GM12878 (cell line): ENCODE measurements at regions of chr7 and their contacts with region 1.

Region 1: DNA sequence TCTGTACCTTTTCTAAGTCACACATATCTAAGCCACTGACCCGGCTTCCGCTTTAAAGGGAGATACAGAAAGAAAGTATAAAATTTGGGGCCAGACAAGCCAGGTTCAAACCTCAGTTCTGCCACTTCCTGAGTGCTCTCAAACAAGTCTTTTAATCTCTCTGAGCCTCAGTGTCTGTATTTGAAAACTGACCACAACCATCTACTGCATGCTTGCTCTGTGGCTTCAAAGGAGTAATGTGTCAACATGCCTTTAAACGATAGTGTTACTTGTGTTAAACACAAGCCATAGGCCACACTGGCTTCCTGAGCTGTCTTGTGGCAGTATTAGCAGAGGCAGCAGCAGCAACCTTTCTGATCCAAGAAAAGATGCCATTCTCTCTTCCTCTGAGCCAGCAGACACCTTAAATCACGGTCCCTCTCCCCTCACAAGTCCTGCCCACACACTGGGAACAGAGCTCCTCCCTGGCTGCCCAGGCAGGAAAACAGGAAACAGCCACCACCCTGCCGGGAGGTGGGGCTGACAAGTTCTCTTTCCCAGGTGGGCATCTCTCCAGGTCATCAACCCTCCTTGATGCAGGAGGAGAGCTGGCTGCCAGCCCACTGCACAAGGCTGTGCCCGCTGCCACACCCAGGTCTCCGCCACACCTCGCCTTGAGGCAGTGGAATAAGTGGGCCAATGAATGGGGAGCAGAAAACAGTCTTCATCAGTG is 10.7 kb downstream of the HIP1 start:
- DNase-seq: no peak
- ATAC-seq: peak; percentile 60
- H3K4me3 ChIP-seq: no peak overlapping the region
- H3K27ac ChIP-seq: peak overlapping the region; percentile 63
- H3K4me1 ChIP-seq: peaks cover 26% of the 10 kb centered on the region
- H3K27me3 ChIP-seq: no peaks in the 10 kb centered on the region
- CTCF ChIP-seq: no peak
- EP300 ChIP-seq: no peak
- POLR2A ChIP-seq: no peak
- RAD21 ChIP-seq: no peak

Region 2: GRCh38 chr7:75565132-75565837 is 162.8 kb before region 1 on chr7:
- CTCF ChIA-PET with region 1: no interaction called
- POLR2A ChIA-PET with region 1: no interaction called
- RAD21 ChIA-PET with region 1: no interaction called
- SMC1A ChIA-PET with region 1: no interaction called
- in situ Hi-C with region 1: no loop called
- intact Hi-C with region 1: no loop called
- DNase-seq: no peak
- ATAC-seq: no peak
- H3K4me3 ChIP-seq: no peak overlapping the region
- H3K27ac ChIP-seq: no peak overlapping the region
- H3K4me1 ChIP-seq: no peaks in the 10 kb centered on the region
- H3K27me3 ChIP-seq: no peaks in the 10 kb centered on the region
- CTCF ChIP-seq: no peak
- EP300 ChIP-seq: no peak
- POLR2A ChIP-seq: no peak
- RAD21 ChIP-seq: no peak

Region 3: GRCh38 chr7:75738987-75739795 is 11.2 kb after region 1 on chr7:
- CTCF ChIA-PET with region 1: interaction called, 3 read pairs
- POLR2A ChIA-PET with region 1: interaction called, 4 read pairs
- RAD21 ChIA-PET with region 1: interaction called, 10 read pairs
- SMC1A ChIA-PET with region 1: interaction called, 4 read pairs
- in situ Hi-C with region 1: no loop called
- intact Hi-C with region 1: no loop called
- DNase-seq: peak; percentile 79
- ATAC-seq: peak; percentile 95
- H3K4me3 ChIP-seq: peak overlapping the region; percentile 99
- H3K27ac ChIP-seq: peak overlapping the region; percentile 71
- H3K4me1 ChIP-seq: peaks cover 18% of the 10 kb centered on the region
- H3K27me3 ChIP-seq: no peaks in the 10 kb centered on the region
- CTCF ChIP-seq: no peak
- EP300 ChIP-seq: no peak; a peak in 1 of 4 replicates
- POLR2A ChIP-seq: peak; percentile 54
- RAD21 ChIP-seq: no peak

Region 4: DNA sequence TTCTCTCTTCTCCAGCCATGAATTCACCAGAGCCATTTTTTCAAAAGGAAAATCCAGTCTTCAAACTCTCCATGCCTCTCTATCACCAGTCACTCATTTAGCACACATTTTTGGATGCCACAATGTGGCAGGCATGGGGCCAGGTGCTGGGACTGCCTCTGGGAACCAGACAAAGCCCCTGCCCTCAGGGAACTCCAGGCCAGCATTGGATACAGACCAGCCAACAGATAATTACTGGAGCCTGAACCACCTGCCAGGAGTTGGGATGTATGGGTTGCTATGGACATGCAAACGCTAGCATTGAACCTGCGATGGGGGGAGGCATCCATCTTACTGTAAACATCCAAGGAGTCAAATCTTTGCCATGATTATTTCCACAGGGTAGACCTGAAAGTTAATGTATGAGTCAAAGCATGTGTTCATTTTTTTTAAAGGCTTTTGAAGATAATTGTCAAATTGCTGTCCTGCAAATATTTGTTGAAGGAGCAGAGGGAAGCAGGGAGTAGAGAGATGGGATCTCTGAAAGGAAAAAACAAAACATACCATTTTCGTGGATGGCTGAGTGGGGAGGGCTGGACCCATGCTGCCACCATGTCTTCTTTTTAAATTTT is 516.8 kb after region 1 on chr7:
- CTCF ChIA-PET with region 1: no interaction called
- POLR2A ChIA-PET with region 1: no interaction called
- RAD21 ChIA-PET with region 1: no interaction called
- SMC1A ChIA-PET with region 1: no interaction called
- in situ Hi-C with region 1: no loop called
- intact Hi-C with region 1: no loop called
- DNase-seq: no peak
- ATAC-seq: no peak
- H3K4me3 ChIP-seq: no peak overlapping the region
- H3K27ac ChIP-seq: no peak overlapping the region
- H3K4me1 ChIP-seq: no peaks in the 10 kb centered on the region
- H3K27me3 ChIP-seq: peaks cover 0 to 1% of the 10 kb centered on the region in 2 experiments; a peak in 1 of 4 replicates
- CTCF ChIP-seq: no peak
- EP300 ChIP-seq: no peak
- POLR2A ChIP-seq: no peak
- RAD21 ChIP-seq: no peak